CD8-positive, alpha-beta T cell (primary cell): ENCODE measurements at regions of chr15 and their contacts with region 1.

Region 1: GRCh38 chr15:101288908-101289513 is 6.0 kb downstream of the SNRPA1 start:
- DNase-seq: peak in 3 of 9 experiments; percentile 29 to 76 (median 66)
- ATAC-seq: peak; percentile 76
- H3K4me3 ChIP-seq: no peak overlapping the region
- H3K4me3 Mint-ChIP-seq: no peak overlapping the region
- H3K27ac ChIP-seq: no peak overlapping the region
- H3K27ac Mint-ChIP-seq: peak overlapping the region; percentile 30
- H3K4me1 ChIP-seq: peaks cover 36% of the 10 kb centered on the region
- H3K4me1 Mint-ChIP-seq: peaks cover 48% of the 10 kb centered on the region
- H3K27me3 ChIP-seq: no peaks in the 10 kb centered on the region
- H3K27me3 Mint-ChIP-seq: no peaks in the 10 kb centered on the region
- CTCF ChIP-seq: peak; percentile 75

Region 2: GRCh38 chr15:101277038-101277882 is 11.8 kb before region 1 on chr15 and contains the start of gene SELENOS:
- CTCF ChIA-PET with region 1: interaction called, 14 read pairs
- POLR2A ChIA-PET with region 1: interaction called, 3 read pairs
- intact Hi-C with region 1: loop called in 1 of 2 experiments (anchors 1 kb)
- DNase-seq: peak; percentile 62 to 94 (median 88)
- ATAC-seq: peak; percentile 93
- H3K4me3 ChIP-seq: peak within 1 kb of the TSS; percentile 75 to 77
- H3K4me3 Mint-ChIP-seq: peak within 1 kb of the TSS; percentile 95
- H3K27ac ChIP-seq: peak within 1 kb of the TSS; percentile 65 to 77
- H3K27ac Mint-ChIP-seq: peak within 1 kb of the TSS; percentile 93
- H3K4me1 ChIP-seq: peaks cover 16% of the 10 kb centered on the region
- H3K4me1 Mint-ChIP-seq: peaks cover 24% of the 10 kb centered on the region
- H3K27me3 ChIP-seq: no peaks in the 10 kb centered on the region
- H3K27me3 Mint-ChIP-seq: no peaks in the 10 kb centered on the region
- CTCF ChIP-seq: no peak
- total RNA-seq, gene SELENOS: 46.0 to 50.4 TPM

Region 3: GRCh38 chr15:101445562-101446517 is 156.8 kb after region 1 on chr15:
- CTCF ChIA-PET with region 1: no interaction called
- POLR2A ChIA-PET with region 1: no interaction called
- intact Hi-C with region 1: no loop called
- DNase-seq: peak in 1 of 9 experiments; percentile 8
- ATAC-seq: no peak
- H3K4me3 ChIP-seq: no peak overlapping the region
- H3K4me3 Mint-ChIP-seq: no peak overlapping the region
- H3K27ac ChIP-seq: no peak overlapping the region
- H3K27ac Mint-ChIP-seq: no peak overlapping the region
- H3K4me1 ChIP-seq: no peaks in the 10 kb centered on the region
- H3K4me1 Mint-ChIP-seq: peaks cover 2% of the 10 kb centered on the region
- H3K27me3 ChIP-seq: no peaks in the 10 kb centered on the region
- H3K27me3 Mint-ChIP-seq: peaks cover 7% of the 10 kb centered on the region
- CTCF ChIP-seq: no peak

Region 4: GRCh38 chr15:101501703-101502373 is 212.8 kb after region 1 on chr15:
- CTCF ChIA-PET with region 1: interaction called, 13 read pairs
- POLR2A ChIA-PET with region 1: no interaction called
- intact Hi-C with region 1: loop called in 1 of 2 experiments (anchors 5 kb)
- DNase-seq: peak; percentile 5 to 71 (median 51)
- ATAC-seq: peak; percentile 88
- H3K4me3 ChIP-seq: peak overlapping the region; percentile 7 to 29
- H3K4me3 Mint-ChIP-seq: peak overlapping the region; percentile 66
- H3K27ac ChIP-seq: no peak overlapping the region
- H3K27ac Mint-ChIP-seq: no peak overlapping the region
- H3K4me1 ChIP-seq: peaks cover 14% of the 10 kb centered on the region
- H3K4me1 Mint-ChIP-seq: peaks cover 18% of the 10 kb centered on the region
- H3K27me3 ChIP-seq: no peaks in the 10 kb centered on the region
- H3K27me3 Mint-ChIP-seq: peaks cover 40% of the 10 kb centered on the region
- CTCF ChIP-seq: peak; percentile 28

Region 5: GRCh38 chr15:101641166-101641764 is 352.3 kb after region 1 on chr15:
- CTCF ChIA-PET with region 1: interaction called, 30 read pairs
- POLR2A ChIA-PET with region 1: interaction called, 3 read pairs
- intact Hi-C with region 1: loop called (anchors 1 kb)
- DNase-seq: peak; percentile 53 to 85 (median 75)
- ATAC-seq: peak; percentile 81
- H3K4me3 ChIP-seq: no peak overlapping the region
- H3K4me3 Mint-ChIP-seq: no peak overlapping the region
- H3K27ac ChIP-seq: peak overlapping the region in 1 of 2 experiments; percentile 59
- H3K27ac Mint-ChIP-seq: peak overlapping the region; percentile 89
- H3K4me1 ChIP-seq: peaks cover 13% of the 10 kb centered on the region
- H3K4me1 Mint-ChIP-seq: peaks cover 26% of the 10 kb centered on the region
- H3K27me3 ChIP-seq: no peaks in the 10 kb centered on the region
- H3K27me3 Mint-ChIP-seq: no peaks in the 10 kb centered on the region
- CTCF ChIP-seq: peak; percentile 99